MCF 10A (cell line): ENCODE measurements at regions of chr15 and their contacts with region 1.

Region 1: GRCh38 chr15:90387537-90388461 is at the start of gene IQGAP1:
- DNase-seq: peak; percentile 96
- H3K4me3 Mint-ChIP-seq: peak within 1 kb of the TSS; percentile 96
- H3K27ac Mint-ChIP-seq: peak within 1 kb of the TSS; percentile 96
- H3K4me1 Mint-ChIP-seq: peaks cover 43% of the 10 kb centered on the region
- H3K27me3 Mint-ChIP-seq: no peaks in the 10 kb centered on the region
- CTCF ChIP-seq: no peak
- total RNA-seq, gene IQGAP1: 264 and 284 TPM in 2 replicates

Region 2: DNA sequence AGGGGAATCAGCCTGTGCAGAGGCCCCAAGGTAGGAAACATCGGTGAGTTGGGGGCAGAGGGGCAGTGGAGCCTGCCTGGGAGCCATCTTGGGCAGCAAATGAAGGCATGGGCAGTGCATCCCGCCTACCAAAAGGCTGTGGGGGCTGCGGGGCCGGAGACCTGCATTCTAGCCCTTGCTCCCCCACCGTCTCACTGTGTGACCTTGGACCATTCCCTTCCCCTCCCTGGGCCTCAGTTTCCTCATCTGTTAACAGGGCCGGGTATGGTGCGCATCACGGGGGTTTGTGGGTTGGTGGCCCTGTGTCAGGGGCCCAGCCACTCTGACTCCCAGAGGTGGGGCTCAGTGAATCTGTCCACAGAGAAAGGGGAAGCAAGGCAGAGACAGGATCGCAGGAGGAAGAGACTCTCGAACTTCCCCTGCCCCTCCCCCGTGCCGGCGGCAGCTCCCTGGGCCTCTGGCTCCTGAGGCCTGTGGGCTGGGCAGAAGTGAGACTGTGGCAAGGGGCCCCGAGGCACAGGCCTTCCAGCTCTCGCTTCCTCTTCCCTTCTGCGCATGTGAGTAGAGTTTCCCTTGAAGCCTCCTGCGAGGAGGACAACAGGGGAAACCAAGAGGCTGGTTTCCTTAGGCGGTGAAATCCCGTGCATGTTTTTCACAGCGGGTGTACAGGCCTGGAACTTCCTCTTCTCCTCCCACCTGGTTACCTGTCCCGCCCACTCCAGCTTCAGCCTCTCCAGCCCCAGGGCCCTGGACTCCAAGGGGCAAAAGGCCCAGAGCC is 328.4 kb before region 1 on chr15:
- CTCF ChIA-PET with region 1: no interaction called
- POLR2A ChIA-PET with region 1: no interaction called
- intact Hi-C with region 1: no loop called
- DNase-seq: peak; percentile 72
- H3K4me3 Mint-ChIP-seq: no peak overlapping the region
- H3K27ac Mint-ChIP-seq: peak overlapping the region; percentile 78
- H3K4me1 Mint-ChIP-seq: peaks cover 25% of the 10 kb centered on the region
- H3K27me3 Mint-ChIP-seq: no peaks in the 10 kb centered on the region
- CTCF ChIP-seq: no peak

Region 3: GRCh38 chr15:90376789-90377188 is 11.0 kb before region 1 on chr15:
- CTCF ChIA-PET with region 1: no interaction called
- POLR2A ChIA-PET with region 1: interaction called, 10 read pairs
- intact Hi-C with region 1: no loop called
- DNase-seq: no peak
- H3K4me3 Mint-ChIP-seq: no peak overlapping the region
- H3K27ac Mint-ChIP-seq: no peak overlapping the region
- H3K4me1 Mint-ChIP-seq: no peaks in the 10 kb centered on the region
- H3K27me3 Mint-ChIP-seq: no peaks in the 10 kb centered on the region
- CTCF ChIP-seq: no peak

Region 4: GRCh38 chr15:90412356-90413194 is 24.8 kb after region 1 on chr15:
- CTCF ChIA-PET with region 1: interaction called, 3 read pairs
- POLR2A ChIA-PET with region 1: interaction called, 58 read pairs
- intact Hi-C with region 1: no loop called
- DNase-seq: peak; percentile 46
- H3K4me3 Mint-ChIP-seq: peak overlapping the region; percentile 8
- H3K27ac Mint-ChIP-seq: peak overlapping the region; percentile 65
- H3K4me1 Mint-ChIP-seq: peaks cover 57% of the 10 kb centered on the region
- H3K27me3 Mint-ChIP-seq: no peaks in the 10 kb centered on the region
- CTCF ChIP-seq: no peak

Region 5: DNA sequence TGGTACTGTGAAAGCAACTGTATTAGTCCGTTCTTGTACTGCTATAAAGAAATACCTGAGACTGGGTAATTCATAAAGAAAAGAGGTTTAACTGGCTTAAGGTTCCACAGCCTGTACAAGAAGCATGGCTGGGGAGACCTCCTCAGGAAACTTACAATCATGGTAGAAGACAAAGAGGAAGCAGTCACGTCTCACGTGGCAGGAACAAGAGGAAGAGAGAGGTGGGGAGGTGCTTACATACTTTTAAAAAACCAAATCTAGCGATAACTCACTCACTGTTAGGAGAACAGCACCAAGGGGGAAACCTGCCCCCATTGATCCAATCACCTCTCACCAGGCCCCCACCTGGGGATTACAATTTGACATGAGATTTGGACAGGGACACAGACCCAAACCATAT is 49.2 kb after region 1 on chr15:
- CTCF ChIA-PET with region 1: interaction called, 3 read pairs
- POLR2A ChIA-PET with region 1: interaction called, 11 read pairs
- intact Hi-C with region 1: loop called (anchors 5 kb)
- DNase-seq: no peak
- H3K4me3 Mint-ChIP-seq: no peak overlapping the region
- H3K27ac Mint-ChIP-seq: no peak overlapping the region
- H3K4me1 Mint-ChIP-seq: peaks cover 20% of the 10 kb centered on the region
- H3K27me3 Mint-ChIP-seq: no peaks in the 10 kb centered on the region
- CTCF ChIP-seq: no peak